ENCODE measurements at regions of chr17 and their contacts with region 1.

Region 1: GRCh38 chr17:50865984-50866774 is at the start of gene TOB1:
- DNase-seq: peak; percentile 53
- ATAC-seq: peak; percentile 90
- H3K4me3 ChIP-seq: peak within 1 kb of the TSS; percentile 95 to 96
- H3K27ac ChIP-seq: peak within 1 kb of the TSS; percentile 99
- H3K4me1 ChIP-seq: peaks cover 33% of the 10 kb centered on the region
- H3K27me3 ChIP-seq: no peaks in the 10 kb centered on the region
- CTCF ChIP-seq: no peak
- total RNA-seq, gene TOB1: 117 TPM

Region 2: DNA sequence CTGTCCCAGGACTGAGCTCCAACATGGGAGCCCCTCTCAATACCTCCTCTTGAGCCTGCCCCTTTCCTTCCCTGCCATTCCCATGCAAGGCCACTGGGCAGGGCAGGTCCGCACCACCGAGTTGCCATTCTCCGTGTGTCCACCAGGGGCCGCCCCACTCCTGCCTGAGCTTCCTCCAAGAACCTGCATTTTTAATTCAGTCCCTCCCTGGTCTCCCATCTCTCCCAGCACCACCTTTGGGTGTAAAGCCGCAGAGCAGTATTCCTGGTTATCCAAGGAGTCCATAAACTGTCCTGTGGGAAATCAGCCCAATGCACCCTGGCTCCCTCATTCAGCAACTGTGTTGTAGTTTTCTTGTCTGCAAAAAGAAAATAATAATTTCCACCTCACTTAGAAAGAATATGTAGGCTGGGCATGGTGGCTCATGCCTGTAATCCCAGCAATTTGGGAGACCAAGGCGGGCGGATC is 83.0 kb before region 1 on chr17:
- CTCF ChIA-PET with region 1: no interaction called
- POLR2A ChIA-PET with region 1: no interaction called
- in situ Hi-C with region 1: no loop called
- intact Hi-C with region 1: no loop called
- DNase-seq: peak; percentile 74
- ATAC-seq: peak; percentile 99
- H3K4me3 ChIP-seq: no peak overlapping the region
- H3K27ac ChIP-seq: no peak overlapping the region
- H3K4me1 ChIP-seq: no peaks in the 10 kb centered on the region
- H3K27me3 ChIP-seq: no peaks in the 10 kb centered on the region
- CTCF ChIP-seq: peak; percentile 99

Region 3: GRCh38 chr17:50841949-50842354 is 24.2 kb before region 1 on chr17:
- CTCF ChIA-PET with region 1: interaction called, 4 read pairs
- POLR2A ChIA-PET with region 1: interaction called, 11 read pairs
- in situ Hi-C with region 1: no loop called
- intact Hi-C with region 1: no loop called
- DNase-seq: no peak
- ATAC-seq: peak; percentile 92
- H3K4me3 ChIP-seq: no peak overlapping the region
- H3K27ac ChIP-seq: no peak overlapping the region
- H3K4me1 ChIP-seq: no peaks in the 10 kb centered on the region
- H3K27me3 ChIP-seq: no peaks in the 10 kb centered on the region
- CTCF ChIP-seq: peak; percentile 89

Region 4: GRCh38 chr17:50908860-50909764 is 42.9 kb after region 1 on chr17:
- CTCF ChIA-PET with region 1: interaction called, 7 read pairs
- POLR2A ChIA-PET with region 1: interaction called, 15 read pairs
- in situ Hi-C with region 1: no loop called
- intact Hi-C with region 1: no loop called
- DNase-seq: no peak
- ATAC-seq: peak; percentile 45
- H3K4me3 ChIP-seq: no peak overlapping the region
- H3K27ac ChIP-seq: peak overlapping the region; percentile 78
- H3K4me1 ChIP-seq: peaks cover 34% of the 10 kb centered on the region
- H3K27me3 ChIP-seq: no peaks in the 10 kb centered on the region
- CTCF ChIP-seq: no peak

Region 5: DNA sequence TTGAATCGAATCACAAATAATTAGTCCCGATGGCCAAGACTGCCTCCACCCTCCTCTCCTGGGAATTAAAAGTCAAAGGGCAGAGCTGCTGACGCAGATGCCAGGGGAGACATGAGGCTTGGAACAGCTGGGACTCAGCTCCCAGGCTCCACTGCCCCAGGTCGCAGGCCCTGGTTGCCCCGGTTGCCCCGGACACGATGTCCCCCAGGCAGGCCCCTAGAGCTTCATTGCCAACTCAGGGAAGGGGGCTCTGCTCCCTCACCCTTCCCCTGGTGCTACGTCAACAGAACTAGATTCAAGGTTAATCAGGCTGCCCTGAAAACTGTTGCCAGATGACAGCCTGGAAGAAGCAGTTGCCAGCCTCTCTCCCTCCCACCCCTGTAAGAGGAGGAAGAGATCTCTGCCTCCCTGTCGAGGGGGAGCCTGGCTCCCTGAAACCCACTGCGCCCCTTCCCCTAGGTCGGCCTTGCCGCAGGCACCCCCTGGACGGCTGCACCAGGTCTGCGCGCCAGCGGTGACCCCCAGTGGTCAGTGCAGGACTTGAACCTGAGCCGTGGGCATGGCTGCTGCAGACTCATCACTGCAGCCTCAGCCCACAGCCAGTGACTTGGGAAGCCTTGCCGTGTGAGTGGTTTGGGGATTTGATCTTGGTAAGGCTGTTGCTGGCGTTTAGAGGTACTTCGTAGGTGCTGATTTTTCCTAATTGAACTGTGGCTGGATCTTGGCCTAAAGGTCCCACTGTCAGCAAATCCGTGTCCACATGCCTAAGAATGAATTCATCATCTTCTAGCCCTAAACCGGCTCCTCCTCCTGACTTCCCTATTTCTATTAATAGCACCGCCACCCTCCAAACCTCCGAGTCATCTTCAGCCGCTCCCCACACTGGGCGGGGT is 84.1 kb after region 1 on chr17:
- CTCF ChIA-PET with region 1: interaction called, 7 read pairs
- POLR2A ChIA-PET with region 1: interaction called, 30 read pairs
- in situ Hi-C with region 1: no loop called
- intact Hi-C with region 1: loop called (anchors 1 kb)
- DNase-seq: peak; percentile 67
- ATAC-seq: peak; percentile 86
- H3K4me3 ChIP-seq: peak overlapping the region in 1 of 2 experiments; percentile 15; a peak in 1 of 4 replicates
- H3K27ac ChIP-seq: peak overlapping the region; percentile 87
- H3K4me1 ChIP-seq: peaks cover 63% of the 10 kb centered on the region
- H3K27me3 ChIP-seq: no peaks in the 10 kb centered on the region
- CTCF ChIP-seq: peak; percentile 96

Region 6: DNA sequence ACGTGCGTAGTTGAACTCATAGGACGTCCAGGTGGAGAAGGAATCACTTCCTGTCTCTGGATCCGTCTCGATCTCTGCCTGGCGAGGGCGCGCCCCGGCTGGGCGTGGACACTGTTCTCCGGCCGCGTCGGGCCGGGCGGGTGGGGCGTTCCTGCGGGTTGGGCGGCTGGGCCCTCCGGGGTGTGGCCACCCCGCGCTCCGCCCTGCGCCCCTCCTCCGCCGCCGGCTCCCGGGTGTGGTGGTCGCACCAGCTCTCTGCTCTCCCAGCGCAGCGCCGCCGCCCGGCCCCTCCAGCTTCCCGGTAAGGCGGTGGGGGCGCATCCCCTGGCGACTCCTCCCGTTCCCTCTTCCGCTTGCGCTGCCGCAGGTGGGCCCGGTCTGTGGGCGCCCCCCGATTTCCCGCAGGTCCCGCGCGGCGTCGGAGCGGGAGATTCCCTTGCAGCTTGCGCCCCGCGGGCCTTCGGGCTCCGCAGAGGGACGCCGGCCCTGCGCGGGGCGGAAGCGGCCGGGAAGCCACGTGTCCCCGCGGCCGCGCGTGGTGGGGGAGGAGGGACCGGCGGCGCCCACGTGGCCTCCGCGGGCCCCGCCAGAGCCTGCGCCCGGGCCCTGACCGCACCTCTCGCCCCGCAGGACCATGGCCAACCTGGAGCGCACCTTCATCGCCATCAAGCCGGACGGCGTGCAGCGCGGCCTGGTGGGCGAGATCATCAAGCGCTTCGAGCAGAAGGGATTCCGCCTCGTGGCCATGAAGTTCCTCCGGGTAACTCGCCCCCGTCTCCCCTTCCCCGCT is 300.2 kb after region 1 on chr17 and contains the start of gene NME2:
- CTCF ChIA-PET with region 1: no interaction called
- POLR2A ChIA-PET with region 1: interaction called, 16 read pairs
- in situ Hi-C with region 1: no loop called
- intact Hi-C with region 1: no loop called
- DNase-seq: peak; percentile 47
- ATAC-seq: peak; percentile 94
- H3K4me3 ChIP-seq: peak within 1 kb of the TSS; percentile 71 to 93
- H3K27ac ChIP-seq: peak within 1 kb of the TSS; percentile 89
- H3K4me1 ChIP-seq: peaks cover 11% of the 10 kb centered on the region
- H3K27me3 ChIP-seq: no peaks in the 10 kb centered on the region
- CTCF ChIP-seq: no peak
- total RNA-seq, gene NME2: 1,280 TPM

Measured in Panc1 (cell line).